B cell (primary cell): ENCODE measurements at regions of chr12 and their contacts with region 1.

Region 1: GRCh38 chr12:68932961-68933893 is at the start of gene CPM:
- DNase-seq: peak; percentile 81
- ATAC-seq: peak; percentile 98
- H3K4me3 ChIP-seq: peak within 1 kb of the TSS; percentile 66 to 95 (median 72)
- H3K4me3 Mint-ChIP-seq: peak within 1 kb of the TSS; percentile 95
- H3K27ac ChIP-seq: peak within 1 kb of the TSS in 1 of 2 donors; percentile 18
- H3K27ac Mint-ChIP-seq: peak within 1 kb of the TSS; percentile 56
- H3K4me1 ChIP-seq: peaks cover 11 to 16% of the 10 kb centered on the region in 2 donors
- H3K4me1 Mint-ChIP-seq: peaks cover 10% of the 10 kb centered on the region
- H3K27me3 ChIP-seq: peaks cover 0 to 5% (median 2%) of the 10 kb centered on the region in 4 experiments
- H3K27me3 Mint-ChIP-seq: no peaks in the 10 kb centered on the region
- CTCF ChIP-seq: no peak
- total RNA-seq, gene CPM: 5.0 and 6.4 TPM in 2 replicates

Region 2: DNA sequence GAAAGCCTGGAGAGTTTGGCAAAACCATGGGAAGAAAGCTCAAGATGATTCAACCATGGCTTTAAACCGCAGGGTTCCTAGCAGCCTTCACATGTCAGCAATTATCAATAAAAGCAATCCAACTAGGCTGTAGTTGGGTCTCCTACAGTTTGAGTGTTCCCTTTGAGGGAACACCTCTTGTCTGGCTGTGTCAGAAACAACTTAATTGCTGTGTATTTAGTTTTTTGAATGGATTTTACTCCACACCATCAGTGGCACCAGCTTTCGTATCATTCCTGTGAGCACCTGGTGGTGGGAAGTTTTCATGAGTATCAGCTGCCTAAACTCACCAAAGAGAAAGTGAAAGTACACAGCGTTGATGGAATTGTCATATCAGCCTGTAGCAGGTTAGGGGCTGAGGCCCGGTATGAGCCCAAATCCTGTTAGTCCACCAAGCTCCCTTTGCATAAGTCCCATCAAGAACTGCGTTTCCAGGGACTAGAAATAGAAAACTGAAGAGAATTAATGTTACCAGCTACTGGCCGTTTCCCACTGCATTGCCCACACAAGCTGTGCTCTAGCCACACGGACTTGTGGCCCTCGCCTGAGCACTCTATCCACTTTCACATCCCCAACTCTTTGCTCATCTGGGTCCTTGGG is 696.7 kb before region 1 on chr12:
- CTCF ChIA-PET with region 1: no interaction called
- POLR2A ChIA-PET with region 1: no interaction called
- intact Hi-C with region 1: loop called (anchors 2 kb)
- DNase-seq: peak; percentile 74
- ATAC-seq: peak; percentile 71
- H3K4me3 ChIP-seq: peak overlapping the region; percentile 6 to 62 (median 55)
- H3K4me3 Mint-ChIP-seq: peak overlapping the region; percentile 91
- H3K27ac ChIP-seq: peak overlapping the region; percentile 78 to 81
- H3K27ac Mint-ChIP-seq: peak overlapping the region; percentile 91
- H3K4me1 ChIP-seq: peaks cover 28 to 32% of the 10 kb centered on the region in 2 donors
- H3K4me1 Mint-ChIP-seq: peaks cover 33% of the 10 kb centered on the region
- H3K27me3 ChIP-seq: no peaks in the 10 kb centered on the region
- H3K27me3 Mint-ChIP-seq: no peaks in the 10 kb centered on the region
- CTCF ChIP-seq: no peak

Region 3: DNA sequence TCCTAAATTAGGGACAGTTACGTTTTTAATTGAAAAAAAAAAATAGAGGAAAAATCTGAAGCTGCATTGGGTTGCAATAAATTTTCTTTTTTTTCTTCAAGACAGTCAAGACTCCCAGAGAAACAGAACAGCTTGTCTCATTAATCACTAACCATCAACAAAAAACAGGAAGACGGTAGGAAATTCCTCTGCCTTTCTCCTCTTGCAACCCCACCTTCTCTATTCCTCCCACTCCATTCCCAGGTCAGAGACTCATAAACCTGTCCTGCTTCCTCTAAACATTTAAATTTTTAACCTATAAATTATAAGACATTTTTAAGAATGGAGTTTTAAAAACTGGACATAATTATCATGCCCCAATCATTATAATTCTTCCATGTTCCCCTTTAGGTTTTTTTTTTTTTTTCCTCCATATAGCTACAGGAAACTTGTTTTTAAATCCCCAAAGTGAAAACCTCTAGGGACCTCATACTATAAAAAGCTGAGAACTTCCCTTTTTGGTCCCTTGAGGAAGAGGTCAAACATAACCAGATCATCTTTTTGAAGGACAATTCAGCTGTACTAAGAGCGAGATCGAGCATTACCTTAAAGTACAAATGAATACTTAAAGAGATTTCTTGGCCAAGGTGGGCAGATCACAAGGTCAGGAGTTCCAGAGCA is 36.2 kb before region 1 on chr12:
- CTCF ChIA-PET with region 1: no interaction called
- POLR2A ChIA-PET with region 1: no interaction called
- intact Hi-C with region 1: loop called (anchors 2 kb)
- DNase-seq: peak; percentile 56
- ATAC-seq: peak; percentile 69
- H3K4me3 ChIP-seq: peak overlapping the region in 2 of 5 experiments; percentile 17 to 19
- H3K4me3 Mint-ChIP-seq: peak overlapping the region; percentile 67
- H3K27ac ChIP-seq: no peak overlapping the region
- H3K27ac Mint-ChIP-seq: peak overlapping the region; percentile 7
- H3K4me1 ChIP-seq: peaks cover 31 to 33% of the 10 kb centered on the region in 2 donors
- H3K4me1 Mint-ChIP-seq: peaks cover 45% of the 10 kb centered on the region
- H3K27me3 ChIP-seq: no peaks in the 10 kb centered on the region
- H3K27me3 Mint-ChIP-seq: no peaks in the 10 kb centered on the region
- CTCF ChIP-seq: no peak

Region 4: DNA sequence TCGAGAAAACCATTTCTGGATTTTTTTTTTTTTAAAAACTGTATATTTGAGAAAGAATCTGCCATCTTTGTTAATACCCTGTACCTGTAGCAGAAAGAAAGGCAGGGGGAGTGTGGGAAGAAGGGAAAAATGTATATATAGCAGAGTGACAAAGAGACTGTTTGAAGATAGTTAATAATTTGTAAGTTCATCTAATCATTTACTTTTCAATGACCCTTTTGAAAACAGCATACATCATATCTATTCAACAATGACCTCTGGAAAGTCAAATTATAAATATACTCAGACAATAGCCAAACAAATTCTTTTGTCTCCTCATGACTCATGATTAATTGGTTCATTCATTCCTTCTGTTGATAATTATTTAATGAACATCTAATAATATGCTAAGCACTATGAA is 10.6 kb after region 1 on chr12:
- CTCF ChIA-PET with region 1: no interaction called
- POLR2A ChIA-PET with region 1: interaction called, 10 read pairs
- intact Hi-C with region 1: no loop called
- DNase-seq: no peak
- ATAC-seq: no peak
- H3K4me3 ChIP-seq: no peak overlapping the region
- H3K4me3 Mint-ChIP-seq: no peak overlapping the region
- H3K27ac ChIP-seq: no peak overlapping the region
- H3K27ac Mint-ChIP-seq: no peak overlapping the region
- H3K4me1 ChIP-seq: no peaks in the 10 kb centered on the region
- H3K4me1 Mint-ChIP-seq: peaks cover 3% of the 10 kb centered on the region
- H3K27me3 ChIP-seq: no peaks in the 10 kb centered on the region
- H3K27me3 Mint-ChIP-seq: no peaks in the 10 kb centered on the region
- CTCF ChIP-seq: no peak

Region 5: DNA sequence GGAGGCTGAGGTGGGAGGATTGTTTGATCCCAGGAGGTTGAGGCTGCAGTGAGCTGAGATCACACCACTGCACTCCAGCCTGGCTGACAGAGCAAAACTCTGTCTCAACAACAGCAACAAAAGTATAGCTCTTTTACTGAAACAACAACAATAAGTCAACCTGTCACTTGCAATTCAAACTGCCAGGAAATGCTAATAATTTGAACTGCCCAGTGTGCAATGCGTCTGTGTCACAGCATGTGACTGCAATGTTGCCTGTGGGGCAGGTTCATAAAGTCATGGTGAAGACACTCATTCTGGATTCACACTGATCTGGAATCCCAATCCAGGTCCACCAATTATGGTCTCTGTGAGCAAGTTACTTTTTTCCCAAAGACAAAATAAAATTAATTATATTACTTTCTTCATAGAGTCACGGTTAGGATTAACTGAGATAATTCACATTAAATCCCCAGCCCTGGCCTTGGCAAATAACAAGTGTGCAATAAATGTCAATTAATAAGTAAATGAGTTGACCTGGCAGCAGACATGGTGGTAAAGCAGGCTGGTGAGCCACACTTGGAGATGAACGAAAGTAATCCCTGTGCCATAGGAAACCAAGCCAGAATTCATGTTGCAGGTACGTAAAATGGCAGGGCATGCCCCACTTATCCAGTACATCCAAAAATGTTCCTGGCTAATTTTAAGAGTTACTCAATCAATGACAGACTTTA is 217.0 kb after region 1 on chr12:
- CTCF ChIA-PET with region 1: no interaction called
- POLR2A ChIA-PET with region 1: no interaction called
- intact Hi-C with region 1: no loop called
- DNase-seq: no peak
- ATAC-seq: no peak
- H3K4me3 ChIP-seq: no peak overlapping the region
- H3K4me3 Mint-ChIP-seq: no peak overlapping the region
- H3K27ac ChIP-seq: no peak overlapping the region
- H3K27ac Mint-ChIP-seq: no peak overlapping the region
- H3K4me1 ChIP-seq: no peaks in the 10 kb centered on the region
- H3K4me1 Mint-ChIP-seq: peaks cover 2% of the 10 kb centered on the region
- H3K27me3 ChIP-seq: peaks cover 0 to 2% (median 0%) of the 10 kb centered on the region in 4 experiments
- H3K27me3 Mint-ChIP-seq: no peaks in the 10 kb centered on the region
- CTCF ChIP-seq: no peak

Region 6: DNA sequence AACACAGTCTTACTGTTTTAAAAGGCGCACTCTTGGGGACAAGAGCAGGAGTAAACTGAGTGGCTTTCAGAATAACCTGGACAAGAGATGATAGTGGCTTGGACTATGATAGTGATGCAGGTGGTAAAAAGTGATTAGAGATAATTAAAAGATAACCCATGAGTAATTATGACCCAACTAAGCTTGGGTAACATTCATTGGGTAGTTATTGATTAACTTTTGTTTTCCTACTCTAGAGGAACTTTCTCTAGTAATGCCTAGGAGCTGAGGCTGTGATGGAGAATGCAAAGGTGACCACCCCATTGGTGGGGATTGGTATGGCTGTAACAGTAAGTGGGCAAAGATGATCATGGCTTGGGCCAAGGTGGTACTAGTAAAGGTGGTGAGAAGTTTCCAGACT is 514.7 kb after region 1 on chr12:
- CTCF ChIA-PET with region 1: no interaction called
- POLR2A ChIA-PET with region 1: no interaction called
- intact Hi-C with region 1: no loop called
- DNase-seq: no peak
- ATAC-seq: no peak
- H3K4me3 ChIP-seq: no peak overlapping the region
- H3K4me3 Mint-ChIP-seq: no peak overlapping the region
- H3K27ac ChIP-seq: no peak overlapping the region
- H3K27ac Mint-ChIP-seq: no peak overlapping the region
- H3K4me1 ChIP-seq: no peaks in the 10 kb centered on the region
- H3K4me1 Mint-ChIP-seq: no peaks in the 10 kb centered on the region
- H3K27me3 ChIP-seq: no peaks in the 10 kb centered on the region
- H3K27me3 Mint-ChIP-seq: peaks cover 5% of the 10 kb centered on the region
- CTCF ChIP-seq: no peak